ENCODE measurements at regions of chr9 and their contacts with region 1.

Region 1: DNA sequence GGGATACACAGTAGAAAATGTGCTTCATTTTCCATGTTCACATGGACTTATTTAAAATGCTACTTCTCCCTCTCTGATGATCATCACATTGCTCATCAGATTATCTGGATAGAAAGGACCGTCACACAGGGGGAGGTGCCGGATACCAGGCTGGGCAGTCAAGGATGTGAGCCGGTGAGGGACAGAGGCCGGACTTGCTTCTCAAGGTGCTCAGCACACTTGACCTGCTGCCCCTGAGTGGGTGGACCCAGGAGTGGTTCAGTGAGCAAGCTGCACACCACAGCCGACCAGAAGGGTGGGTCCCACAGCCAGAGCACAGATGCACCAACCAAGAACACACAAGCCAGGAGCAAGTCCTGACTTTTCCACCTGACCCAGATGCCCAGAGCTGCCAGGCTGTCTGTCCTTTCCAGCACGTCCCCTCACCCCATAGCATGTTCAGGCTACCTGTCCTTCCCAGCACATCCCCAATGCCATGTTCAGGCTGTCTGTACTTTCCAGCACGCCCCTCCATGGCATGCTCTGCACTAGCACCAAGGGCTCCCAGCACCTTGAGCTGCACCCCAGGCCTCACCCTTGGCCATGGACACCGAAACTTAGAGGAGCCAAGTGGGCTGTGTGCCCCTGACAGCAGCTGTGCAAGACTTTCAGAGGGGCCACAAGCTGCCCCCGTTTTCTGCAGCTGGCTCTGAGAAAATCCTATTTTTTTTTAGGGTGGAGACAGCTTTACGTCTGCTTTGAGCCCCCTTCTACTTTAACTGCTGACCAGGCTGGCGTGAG is 77.8 kb downstream of the SECISBP2 start:
- DNase-seq: no peak
- H3K4me3 ChIP-seq: no peak overlapping the region
- H3K27ac ChIP-seq: no peak overlapping the region
- H3K4me1 ChIP-seq: no peaks in the 10 kb centered on the region
- H3K27me3 ChIP-seq: no peaks in the 10 kb centered on the region
- CTCF ChIP-seq: no peak

Region 2: DNA sequence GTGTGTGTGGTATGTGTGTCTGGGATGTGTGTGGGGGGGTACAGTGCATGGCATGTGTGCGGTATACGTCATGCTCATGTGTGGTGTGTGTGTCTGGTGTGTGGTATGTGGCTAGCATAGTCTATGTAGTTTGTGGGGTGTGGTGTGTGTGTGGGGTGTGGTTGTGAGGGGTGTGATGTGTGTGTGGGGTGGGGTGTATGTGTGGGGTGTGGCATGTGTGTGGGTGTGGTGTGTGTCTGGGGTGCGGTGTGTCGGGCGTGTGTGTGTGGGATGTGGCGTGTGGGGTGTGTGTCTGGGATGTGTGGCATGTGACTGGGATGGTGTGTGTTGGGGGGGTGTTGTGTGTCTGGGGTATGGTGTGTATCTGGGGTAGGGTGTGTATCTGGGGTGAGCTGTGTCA is 25.5 kb before region 1 on chr9:
- intact Hi-C with region 1: loop called (anchors 2 kb)
- DNase-seq: no peak
- H3K4me3 ChIP-seq: no peak overlapping the region
- H3K27ac ChIP-seq: no peak overlapping the region
- H3K4me1 ChIP-seq: no peaks in the 10 kb centered on the region
- H3K27me3 ChIP-seq: no peaks in the 10 kb centered on the region
- CTCF ChIP-seq: no peak

Region 3: GRCh38 chr9:89839449-89839848 is 443.3 kb after region 1 on chr9:
- intact Hi-C with region 1: no loop called
- DNase-seq: no peak
- H3K4me3 ChIP-seq: no peak overlapping the region
- H3K27ac ChIP-seq: no peak overlapping the region
- H3K4me1 ChIP-seq: no peaks in the 10 kb centered on the region
- H3K27me3 ChIP-seq: no peaks in the 10 kb centered on the region
- CTCF ChIP-seq: no peak

Measured in tibial artery (tissue), 4 donors.